Cardiac septum (tissue), 1 donor: ENCODE measurements at regions of chr10 and their contacts with region 1.

Region 1: DNA sequence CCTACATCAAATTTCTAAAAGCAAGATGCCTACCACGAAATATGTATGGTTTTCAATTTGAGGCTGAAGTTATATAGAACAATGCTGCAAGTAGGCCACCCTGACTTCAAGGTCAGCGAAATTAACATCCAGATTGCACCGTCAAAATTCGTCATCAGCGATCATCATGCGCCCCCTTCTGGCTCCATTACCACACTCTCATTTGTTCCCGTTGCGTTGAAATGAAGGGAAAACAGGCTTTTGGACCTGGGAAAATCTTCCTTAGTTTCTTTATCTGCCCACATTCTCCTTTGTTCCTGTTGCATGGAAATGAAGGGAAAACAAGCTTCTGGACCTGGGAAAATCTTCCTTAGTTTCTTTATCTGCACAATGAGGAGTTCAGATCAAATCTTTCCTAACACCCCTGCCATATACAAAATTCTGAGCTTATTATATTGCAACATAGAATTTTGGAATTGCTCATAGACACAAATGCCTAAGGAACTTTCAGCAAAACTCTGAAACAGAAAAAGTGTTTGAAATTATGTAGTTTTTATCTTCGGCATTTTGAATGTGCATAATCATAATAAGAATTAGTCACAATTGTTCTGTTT is 98.2 kb upstream of the PRKCQ start:
- DNase-seq: no peak

Region 2: DNA sequence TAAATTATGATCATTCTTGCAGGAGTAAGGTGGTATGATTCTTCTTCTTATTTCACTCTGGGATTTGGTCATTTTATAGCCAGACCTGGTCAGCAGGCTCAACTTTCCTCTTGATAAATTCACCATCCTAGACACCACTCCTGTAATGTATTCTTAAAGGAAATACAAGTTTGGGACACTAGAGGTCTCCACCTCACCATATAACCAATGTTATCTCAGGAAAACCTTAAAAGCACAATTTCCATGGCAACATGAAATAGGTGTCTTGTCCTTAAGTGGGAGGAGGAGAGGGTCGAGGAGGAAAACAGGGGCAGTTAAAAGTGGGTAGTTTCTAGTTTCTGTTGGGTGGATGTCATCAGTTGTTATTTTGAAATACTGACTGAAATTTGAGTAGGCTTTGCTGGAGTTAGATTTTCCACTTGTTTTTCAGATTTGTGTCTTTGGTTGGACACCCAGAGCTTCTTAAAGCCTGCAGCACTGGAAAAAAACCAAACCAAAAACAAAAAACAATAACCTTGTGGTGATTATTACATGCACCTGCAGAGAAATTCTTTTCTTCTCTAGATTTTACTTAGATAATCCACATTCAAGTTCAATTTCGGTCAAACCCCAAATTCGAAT is 261.3 kb before region 1 on chr10:
- intact Hi-C with region 1: loop called (anchors 10 kb)
- DNase-seq: no peak